Stomach (tissue), 19 donors: ENCODE measurements at regions of chr22 and their contacts with region 1.

Region 1: DNA sequence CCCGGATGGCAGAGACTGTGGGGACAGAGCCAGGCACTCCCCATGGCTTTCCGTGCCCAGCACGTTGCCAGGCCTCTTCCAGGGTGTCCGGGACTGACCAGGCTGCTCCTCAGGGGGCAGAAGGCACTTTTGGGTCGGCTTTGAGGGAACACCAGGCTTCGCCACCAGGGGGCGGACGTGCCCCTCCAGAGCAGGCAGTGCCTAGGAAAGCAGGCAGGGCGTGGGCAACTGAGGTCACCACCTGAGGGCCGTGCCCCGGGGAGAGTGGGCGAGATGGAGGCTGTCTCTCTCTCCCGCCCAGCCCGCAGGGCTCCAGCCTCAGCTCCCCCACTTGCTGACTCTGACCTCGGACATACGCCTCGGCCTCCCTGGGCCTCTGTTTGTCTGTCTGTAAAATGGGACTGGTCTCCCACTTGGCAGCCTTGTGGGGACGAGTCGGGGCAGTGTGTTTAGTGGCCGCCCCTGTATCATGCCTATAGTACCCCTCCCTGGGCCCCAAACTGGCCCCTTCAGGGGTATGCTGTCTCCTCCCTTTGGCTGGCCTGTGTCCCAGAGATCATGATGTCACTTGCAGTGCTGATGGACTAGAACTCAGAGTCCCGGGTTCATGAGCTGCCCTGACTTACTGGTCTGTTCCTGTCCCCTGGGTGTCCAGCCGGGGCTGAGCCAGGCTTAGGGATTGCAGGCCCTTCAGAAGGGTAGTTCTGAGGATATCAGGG is 4.4 kb upstream of the PRR5 start:
- DNase-seq: peak; percentile 87 to 93
- H3K4me3 ChIP-seq: no peak overlapping the region
- H3K27ac ChIP-seq: peak overlapping the region in 1 of 5 donors; percentile 68
- H3K4me1 ChIP-seq: peaks cover 7 to 28% (median 18%) of the 10 kb centered on the region in 4 donors
- H3K27me3 ChIP-seq: peaks cover 0 to 13% (median 0%) of the 10 kb centered on the region in 3 donors
- CTCF ChIP-seq: peak in 5 of 7 experiments; percentile 85 to 94 (median 92)
- EP300 ChIP-seq: no peak
- POLR2A ChIP-seq: no peak

Region 2: GRCh38 chr22:42717197-42717928 is 1980.2 kb before region 1 on chr22:
- intact Hi-C with region 1: no loop called
- DNase-seq: peak in 1 of 2 donors; percentile 16
- H3K4me3 ChIP-seq: no peak overlapping the region
- H3K27ac ChIP-seq: peak overlapping the region in 4 of 5 donors; percentile 2 to 93 (median 58)
- H3K4me1 ChIP-seq: peaks cover 27 to 71% (median 59%) of the 10 kb centered on the region in 4 donors
- H3K27me3 ChIP-seq: peaks cover 0 to 33% (median 14%) of the 10 kb centered on the region in 3 donors
- CTCF ChIP-seq: no peak
- EP300 ChIP-seq: no peak
- POLR2A ChIP-seq: no peak

Region 3: GRCh38 chr22:44735540-44736488 is 38.2 kb after region 1 on chr22:
- intact Hi-C with region 1: loop called (anchors 5 kb)
- DNase-seq: peak; percentile 84 to 88
- H3K4me3 ChIP-seq: no peak overlapping the region
- H3K27ac ChIP-seq: no peak overlapping the region
- H3K4me1 ChIP-seq: peaks cover 0 to 35% (median 15%) of the 10 kb centered on the region in 4 donors
- H3K27me3 ChIP-seq: peaks cover 0 to 44% (median 0%) of the 10 kb centered on the region in 3 donors
- CTCF ChIP-seq: peak in 6 of 7 experiments; percentile 94 to 100 (median 99)
- EP300 ChIP-seq: no peak
- POLR2A ChIP-seq: no peak